ENCODE measurements at regions of chr11 and their contacts with region 1.

Region 1: GRCh38 chr11:62787005-62787759 is at the start of gene TMEM179B:
- DNase-seq: peak; percentile 93
- ATAC-seq: peak; percentile 73
- H3K4me3 Mint-ChIP-seq: peak within 1 kb of the TSS; percentile 92
- H3K27ac Mint-ChIP-seq: peak within 1 kb of the TSS; percentile 97
- H3K4me1 Mint-ChIP-seq: peaks cover 38% of the 10 kb centered on the region
- H3K27me3 Mint-ChIP-seq: no peaks in the 10 kb centered on the region
- total RNA-seq, gene TMEM179B: 48.7 to 52.2 TPM

Region 2: DNA sequence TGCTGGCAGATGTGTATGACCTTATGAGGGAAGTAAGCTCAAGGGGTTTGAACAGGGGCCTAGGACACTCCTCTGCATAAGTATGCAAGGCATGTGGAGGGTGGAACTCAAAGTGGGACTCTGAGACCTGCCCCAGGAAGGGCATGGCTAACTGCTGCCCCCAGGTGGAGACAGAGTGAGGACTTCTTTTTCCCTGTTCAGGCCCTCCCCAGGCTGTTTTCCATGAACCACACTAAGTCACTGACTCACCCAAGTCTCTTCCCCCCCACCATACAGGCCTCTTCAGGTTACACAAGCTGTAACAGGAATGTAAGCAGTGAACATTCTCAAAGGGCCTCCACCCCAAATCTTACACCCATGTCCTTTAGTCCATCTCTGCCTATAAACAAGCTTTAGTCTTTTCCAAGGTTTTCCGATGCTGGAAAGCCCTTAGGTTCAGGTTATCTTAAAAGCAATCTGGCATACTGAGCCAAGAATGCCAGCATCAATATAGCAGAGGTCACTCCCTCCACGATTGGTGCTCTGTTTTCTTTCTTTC is 226.5 kb before region 1 on chr11:
- POLR2A ChIA-PET with region 1: no interaction called
- DNase-seq: peak; percentile 71
- ATAC-seq: no peak
- H3K4me3 Mint-ChIP-seq: no peak overlapping the region
- H3K27ac Mint-ChIP-seq: peak overlapping the region; percentile 54
- H3K4me1 Mint-ChIP-seq: peaks cover 46% of the 10 kb centered on the region
- H3K27me3 Mint-ChIP-seq: no peaks in the 10 kb centered on the region

Region 3: GRCh38 chr11:62771144-62772021 is 15.8 kb before region 1 on chr11 and contains the start of gene TAF6L:
- POLR2A ChIA-PET with region 1: interaction called, 47 read pairs
- DNase-seq: peak; percentile 95
- ATAC-seq: peak; percentile 83
- H3K4me3 Mint-ChIP-seq: peak within 1 kb of the TSS; percentile 92
- H3K27ac Mint-ChIP-seq: peak within 1 kb of the TSS; percentile 94
- H3K4me1 Mint-ChIP-seq: peaks cover 13% of the 10 kb centered on the region
- H3K27me3 Mint-ChIP-seq: no peaks in the 10 kb centered on the region
- total RNA-seq, gene TAF6L: 20.6 to 22.2 TPM

Region 4: DNA sequence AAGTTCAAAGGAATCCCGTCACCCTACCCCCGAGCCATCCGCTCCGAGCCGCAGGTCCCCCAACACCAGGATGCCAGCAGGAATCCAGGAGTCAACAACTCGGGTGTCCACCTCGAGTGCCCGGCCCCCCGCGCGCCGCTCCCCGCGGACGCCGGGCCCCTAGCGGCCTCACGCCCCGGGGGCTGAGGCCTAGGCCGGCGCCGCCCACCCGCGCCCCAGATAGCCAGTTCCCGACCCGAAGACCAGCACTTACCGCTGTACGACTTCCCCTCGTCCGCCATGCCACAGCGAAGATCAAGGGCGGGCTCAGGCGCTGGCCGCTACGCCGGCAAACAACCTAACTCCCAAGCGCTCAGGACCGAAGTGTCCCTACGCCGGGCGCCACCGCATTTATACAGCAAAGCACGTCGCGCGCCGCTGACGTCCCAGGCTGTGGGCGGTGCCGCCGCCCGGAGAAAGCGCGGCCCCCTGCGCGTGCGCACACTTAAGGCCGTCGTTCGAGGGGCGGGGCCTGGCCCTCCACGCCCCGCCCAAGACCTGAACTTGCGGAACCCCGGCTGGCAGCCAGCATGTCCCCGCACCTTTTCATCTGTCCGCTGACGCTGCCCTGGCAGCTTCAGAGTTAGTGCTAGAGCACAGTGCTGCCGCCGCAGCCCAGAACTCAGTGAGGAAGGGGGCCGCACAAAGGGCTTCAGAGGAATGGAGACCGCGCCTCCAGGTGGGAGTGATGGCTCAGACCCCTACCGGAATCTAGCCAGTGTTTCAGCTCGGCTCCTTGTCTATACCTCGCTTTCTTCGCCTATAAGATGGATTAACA is 18.1 kb after region 1 on chr11 and contains the start of gene NXF1:
- POLR2A ChIA-PET with region 1: interaction called, 20 read pairs
- DNase-seq: peak; percentile 100
- ATAC-seq: peak; percentile 83
- H3K4me3 Mint-ChIP-seq: peak within 1 kb of the TSS; percentile 99
- H3K27ac Mint-ChIP-seq: peak within 1 kb of the TSS; percentile 99
- H3K4me1 Mint-ChIP-seq: peaks cover 33% of the 10 kb centered on the region
- H3K27me3 Mint-ChIP-seq: no peaks in the 10 kb centered on the region
- total RNA-seq, gene NXF1: 124 to 131 TPM

Region 5: DNA sequence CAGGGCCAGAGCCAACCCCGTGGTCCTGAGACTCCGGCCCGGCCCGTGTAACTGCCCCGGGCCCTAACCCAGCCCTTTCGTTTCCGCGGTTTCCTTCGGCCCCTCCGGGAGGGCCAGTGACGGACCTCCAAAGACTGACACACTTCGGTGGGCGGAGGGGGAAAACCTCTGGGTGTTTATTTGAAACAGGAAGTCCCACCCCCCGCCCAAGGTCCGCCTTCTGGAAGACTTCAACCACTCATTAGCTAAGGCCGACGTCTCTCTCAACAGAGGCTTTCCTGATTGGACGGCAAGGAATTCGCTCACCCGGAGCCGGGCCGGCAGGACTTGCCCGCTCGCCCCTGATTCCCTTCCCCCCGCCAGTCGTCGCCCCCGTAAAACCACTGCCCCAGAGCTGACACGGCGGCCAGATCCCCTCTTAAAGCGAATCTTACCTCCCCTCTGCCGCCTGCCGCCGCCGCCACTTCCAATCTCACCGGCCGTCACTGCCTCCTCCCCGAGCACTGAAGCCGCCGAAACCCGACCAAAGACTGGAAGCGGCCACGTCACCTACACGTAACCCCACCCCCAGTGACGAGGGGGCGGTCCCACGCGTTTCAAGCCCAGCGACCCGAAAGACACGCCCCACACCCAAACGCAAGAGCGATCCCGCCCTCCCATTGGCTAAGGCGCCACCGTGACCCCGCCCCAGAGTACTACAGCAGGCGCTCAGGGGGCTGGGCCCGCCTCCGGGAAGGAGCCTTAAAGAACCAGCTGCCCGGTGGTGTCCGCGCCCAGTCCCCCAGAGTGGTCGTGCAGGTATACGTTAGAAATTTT is 44.5 kb after region 1 on chr11 and contains the start of gene STX5:
- POLR2A ChIA-PET with region 1: interaction called, 51 read pairs
- DNase-seq: peak; percentile 99
- ATAC-seq: peak; percentile 91
- H3K4me3 Mint-ChIP-seq: peak within 1 kb of the TSS; percentile 99
- H3K27ac Mint-ChIP-seq: peak within 1 kb of the TSS; percentile 100
- H3K4me1 Mint-ChIP-seq: peaks cover 26% of the 10 kb centered on the region
- H3K27me3 Mint-ChIP-seq: no peaks in the 10 kb centered on the region
- total RNA-seq, gene STX5: 43.4 to 44.3 TPM

Region 6: DNA sequence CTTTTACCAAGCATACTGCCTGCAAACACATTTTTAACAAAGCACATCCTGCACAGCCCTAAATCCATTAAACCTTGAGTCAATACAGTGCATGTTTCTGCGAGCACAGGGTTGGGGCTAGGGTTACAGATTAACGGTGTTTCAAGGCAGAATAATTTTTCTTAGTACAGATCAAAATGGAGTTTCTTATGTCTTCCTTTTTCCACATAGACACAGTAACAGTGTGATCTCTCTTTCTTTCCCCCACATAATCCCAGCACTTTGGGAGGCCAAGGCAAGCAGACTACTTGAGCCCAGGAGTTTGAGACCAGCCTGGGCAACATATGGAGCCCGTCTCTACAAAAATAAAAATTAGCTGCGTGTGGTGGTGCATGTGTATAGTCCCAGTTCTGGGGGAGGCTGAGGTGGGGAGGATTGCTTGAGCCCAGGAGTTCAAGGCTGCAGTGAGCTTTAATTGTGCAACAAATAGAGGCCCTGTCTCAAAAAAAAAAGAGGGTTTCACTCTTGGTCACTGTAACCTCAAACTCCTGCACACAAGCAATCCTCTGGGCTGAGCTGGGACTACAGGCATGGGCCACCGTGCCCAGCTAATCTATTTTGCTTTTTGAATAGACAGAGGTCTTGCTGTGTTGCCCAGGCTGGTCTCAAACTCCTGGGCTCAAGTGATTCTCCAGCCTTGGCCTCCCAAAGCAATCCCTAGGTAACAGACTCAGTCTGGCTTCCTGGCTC is 73.8 kb after region 1 on chr11:
- POLR2A ChIA-PET with region 1: interaction called, 117 read pairs
- DNase-seq: no peak
- ATAC-seq: no peak
- H3K4me3 Mint-ChIP-seq: no peak overlapping the region
- H3K27ac Mint-ChIP-seq: peak overlapping the region; percentile 63
- H3K4me1 Mint-ChIP-seq: peaks cover 32% of the 10 kb centered on the region
- H3K27me3 Mint-ChIP-seq: no peaks in the 10 kb centered on the region

Region 7: GRCh38 chr11:63251312-63251711 is 464.1 kb after region 1 on chr11:
- POLR2A ChIA-PET with region 1: no interaction called
- DNase-seq: no peak
- ATAC-seq: no peak
- H3K4me3 Mint-ChIP-seq: no peak overlapping the region
- H3K27ac Mint-ChIP-seq: no peak overlapping the region
- H3K4me1 Mint-ChIP-seq: no peaks in the 10 kb centered on the region
- H3K27me3 Mint-ChIP-seq: peaks cover 17% of the 10 kb centered on the region